IMR-90 (cell line): ENCODE measurements at regions of chr16 and their contacts with region 1.

Region 1: DNA sequence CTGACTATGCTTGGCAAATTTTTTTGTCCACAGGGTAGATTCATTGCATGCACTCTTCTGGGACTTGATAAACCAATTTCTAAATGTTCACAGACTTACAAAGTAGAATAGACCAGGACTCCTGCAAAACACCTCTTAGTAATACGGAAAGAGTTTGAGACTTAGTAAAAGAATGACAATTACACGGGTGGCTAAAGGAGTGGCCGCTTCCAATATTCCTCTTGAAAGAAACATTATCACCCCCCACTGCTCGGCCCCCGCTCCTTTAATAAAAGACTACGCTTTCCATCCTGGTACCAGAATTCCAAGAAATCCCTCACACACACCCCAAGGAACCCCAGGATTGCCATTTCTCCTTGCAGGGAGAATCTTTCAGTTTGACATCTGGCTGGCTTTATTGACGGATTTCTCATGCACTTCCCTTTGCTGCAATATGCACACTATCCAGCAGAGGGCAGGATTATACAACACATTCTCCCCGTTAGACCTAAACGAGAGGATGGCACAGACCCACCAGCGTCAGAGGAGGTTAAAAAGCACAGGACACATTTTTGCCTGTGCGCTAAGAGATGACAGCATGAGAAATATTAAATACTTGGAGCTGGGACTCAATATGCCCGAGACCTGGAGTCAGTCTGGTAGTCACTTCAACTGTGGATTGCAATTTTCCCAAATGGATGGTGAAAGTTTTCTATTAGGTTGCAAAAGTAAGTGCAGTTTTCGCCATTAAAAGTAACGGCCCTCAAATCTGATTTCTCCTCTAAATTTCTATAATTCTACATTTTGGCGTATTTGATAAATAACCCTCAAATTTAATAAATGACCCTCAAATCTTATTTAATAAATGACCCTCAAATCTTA is 46.6 kb upstream of the NUDT7 start:
- DNase-seq: peak; percentile 78
- ATAC-seq: peak; percentile 84
- H3K4me3 ChIP-seq: no peak overlapping the region
- H3K27ac ChIP-seq: no peak overlapping the region
- H3K4me1 ChIP-seq: peaks cover 1% of the 10 kb centered on the region; the same call in 1 of the 2 replicates
- H3K27me3 ChIP-seq: no peaks in the 10 kb centered on the region; the same call in none of the 2 replicates
- CTCF ChIP-seq: peak; percentile 97
- POLR2A ChIP-seq: no peak
- RAD21 ChIP-seq: peak; percentile 100

Region 2: GRCh38 chr16:77437859-77438258 is 237.8 kb before region 1 on chr16:
- CTCF ChIA-PET with region 1: no interaction called
- POLR2A ChIA-PET with region 1: no interaction called
- dilution Hi-C with region 1: no loop called
- in situ Hi-C with region 1: no loop called
- intact Hi-C with region 1: no loop called
- DNase-seq: no peak
- ATAC-seq: no peak
- H3K4me3 ChIP-seq: no peak overlapping the region
- H3K27ac ChIP-seq: no peak overlapping the region
- H3K4me1 ChIP-seq: no peaks in the 10 kb centered on the region
- H3K27me3 ChIP-seq: peaks cover 12% of the 10 kb centered on the region
- CTCF ChIP-seq: no peak
- POLR2A ChIP-seq: no peak
- RAD21 ChIP-seq: no peak

Region 3: GRCh38 chr16:77564791-77565390 is 110.8 kb before region 1 on chr16:
- CTCF ChIA-PET with region 1: no interaction called
- POLR2A ChIA-PET with region 1: no interaction called
- dilution Hi-C with region 1: no loop called
- in situ Hi-C with region 1: no loop called
- intact Hi-C with region 1: no loop called
- DNase-seq: peak; percentile 8
- ATAC-seq: peak; percentile 54
- H3K4me3 ChIP-seq: no peak overlapping the region
- H3K27ac ChIP-seq: no peak overlapping the region
- H3K4me1 ChIP-seq: no peaks in the 10 kb centered on the region
- H3K27me3 ChIP-seq: no peaks in the 10 kb centered on the region; the same call in 1 of the 2 replicates
- CTCF ChIP-seq: no peak
- POLR2A ChIP-seq: no peak
- RAD21 ChIP-seq: no peak

Region 4: GRCh38 chr16:77722309-77723107 is 46.8 kb after region 1 on chr16 and contains the start of gene NUDT7:
- CTCF ChIA-PET with region 1: no interaction called
- POLR2A ChIA-PET with region 1: no interaction called
- dilution Hi-C with region 1: no loop called
- in situ Hi-C with region 1: no loop called
- intact Hi-C with region 1: loop called (anchors 1 kb)
- DNase-seq: peak; percentile 96
- ATAC-seq: peak; percentile 98
- H3K4me3 ChIP-seq: peak within 1 kb of the TSS; percentile 72
- H3K27ac ChIP-seq: peak within 1 kb of the TSS; percentile 90
- H3K4me1 ChIP-seq: no peaks in the 10 kb centered on the region
- H3K27me3 ChIP-seq: no peaks in the 10 kb centered on the region
- CTCF ChIP-seq: 0 out of 2 replicates have a peak, but pooled peaks have one; percentile 17
- POLR2A ChIP-seq: 0 out of 2 replicates have a peak, but pooled peaks have one; percentile 26
- RAD21 ChIP-seq: no peak
- total RNA-seq, gene NUDT7: 3.9 and 4.3 TPM in 2 replicates

Region 5: GRCh38 chr16:77788181-77789084 is 112.7 kb after region 1 on chr16 and contains the start of gene VAT1L:
- CTCF ChIA-PET with region 1: no interaction called
- POLR2A ChIA-PET with region 1: no interaction called
- dilution Hi-C with region 1: no loop called
- in situ Hi-C with region 1: no loop called
- intact Hi-C with region 1: loop called (anchors 2 kb)
- DNase-seq: peak; percentile 63
- ATAC-seq: peak; percentile 93
- H3K4me3 ChIP-seq: peak within 1 kb of the TSS; percentile 93
- H3K27ac ChIP-seq: peak within 1 kb of the TSS; percentile 25; the same call in 1 of the 2 replicates
- H3K4me1 ChIP-seq: peaks cover 9% of the 10 kb centered on the region
- H3K27me3 ChIP-seq: peaks cover 4% of the 10 kb centered on the region; the same call in 1 of the 2 replicates
- CTCF ChIP-seq: no peak
- POLR2A ChIP-seq: no peak
- RAD21 ChIP-seq: no peak
- total RNA-seq, gene VAT1L: 18.1 and 18.5 TPM in 2 replicates

Region 6: GRCh38 chr16:78002915-78003538 is 327.3 kb after region 1 on chr16:
- CTCF ChIA-PET with region 1: interaction called, 11 read pairs
- POLR2A ChIA-PET with region 1: no interaction called
- dilution Hi-C with region 1: no loop called
- in situ Hi-C with region 1: no loop called
- intact Hi-C with region 1: loop called (anchors 1 kb)
- DNase-seq: peak; percentile 90
- ATAC-seq: peak; percentile 98
- H3K4me3 ChIP-seq: no peak overlapping the region
- H3K27ac ChIP-seq: no peak overlapping the region
- H3K4me1 ChIP-seq: no peaks in the 10 kb centered on the region
- H3K27me3 ChIP-seq: peaks cover 4% of the 10 kb centered on the region
- CTCF ChIP-seq: peak; percentile 99
- POLR2A ChIP-seq: no peak
- RAD21 ChIP-seq: peak; percentile 95